Panc1 (cell line): ENCODE measurements at regions of chr12 and their contacts with region 1.

Region 1: DNA sequence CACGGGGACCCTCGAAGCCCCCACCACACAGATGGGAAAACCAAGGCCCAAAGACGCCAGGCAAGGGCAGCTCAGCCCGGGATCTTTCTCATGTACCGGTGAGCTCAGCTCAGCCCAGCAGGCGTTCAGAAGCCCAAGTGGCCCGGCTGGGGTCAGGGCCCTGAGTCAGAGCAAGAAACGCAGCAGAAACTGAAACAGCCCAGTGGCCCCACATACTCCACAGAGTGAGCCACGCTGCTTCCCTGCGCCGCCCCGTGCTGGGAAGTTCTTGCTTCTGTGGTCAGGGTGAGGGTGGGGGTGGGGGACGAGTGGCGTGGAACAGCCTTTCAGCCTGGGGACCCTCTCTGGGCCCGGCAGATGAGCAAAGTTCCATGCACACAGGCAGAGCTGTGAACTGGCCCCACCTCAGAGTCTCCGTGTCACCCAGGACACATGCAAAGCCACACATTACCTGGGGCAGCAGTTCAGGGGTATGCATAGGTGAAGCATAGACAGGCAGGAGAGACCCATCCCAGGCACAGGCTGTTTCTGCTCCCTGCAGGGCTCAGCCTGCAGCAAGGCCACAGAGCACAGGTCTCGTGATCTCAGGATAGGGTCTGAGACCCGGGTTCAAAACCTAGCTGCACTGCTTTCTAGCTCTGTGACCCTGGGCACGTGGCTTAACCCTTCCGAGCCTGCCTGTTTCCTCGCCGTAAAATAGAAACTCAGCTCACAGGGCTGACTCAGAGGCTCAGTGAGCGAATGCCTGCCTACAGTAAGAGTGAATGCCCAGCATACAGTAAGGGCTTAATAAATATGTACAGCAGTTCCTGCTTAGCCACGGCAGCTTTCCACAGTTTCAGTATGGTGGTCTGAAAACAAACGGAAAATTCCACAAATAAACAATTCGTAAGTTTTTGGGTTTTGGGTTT is 21.6 kb downstream of the NCOR2 start:
- DNase-seq: no peak
- ATAC-seq: peak; percentile 21
- H3K4me3 ChIP-seq: peak overlapping the region in 1 of 2 experiments; percentile 28; a peak in 2 of 4 replicates
- H3K27ac ChIP-seq: peak overlapping the region; percentile 98
- H3K4me1 ChIP-seq: peaks cover 86% of the 10 kb centered on the region
- H3K27me3 ChIP-seq: no peaks in the 10 kb centered on the region
- CTCF ChIP-seq: no peak

Region 2: GRCh38 chr12:123621619-123622530 is 923.9 kb before region 1 on chr12:
- CTCF ChIA-PET with region 1: no interaction called
- POLR2A ChIA-PET with region 1: no interaction called
- in situ Hi-C with region 1: no loop called
- intact Hi-C with region 1: no loop called
- DNase-seq: no peak
- ATAC-seq: peak; percentile 39; the same call in 1 of the 2 replicates
- H3K4me3 ChIP-seq: no peak overlapping the region
- H3K27ac ChIP-seq: no peak overlapping the region
- H3K4me1 ChIP-seq: no peaks in the 10 kb centered on the region
- H3K27me3 ChIP-seq: no peaks in the 10 kb centered on the region
- CTCF ChIP-seq: no peak

Region 3: GRCh38 chr12:124514145-124514995 is 31.4 kb before region 1 on chr12:
- CTCF ChIA-PET with region 1: interaction called, 3 read pairs
- POLR2A ChIA-PET with region 1: interaction called, 13 read pairs
- in situ Hi-C with region 1: no loop called
- intact Hi-C with region 1: no loop called
- DNase-seq: no peak
- ATAC-seq: no peak
- H3K4me3 ChIP-seq: no peak overlapping the region
- H3K27ac ChIP-seq: peak overlapping the region; percentile 90
- H3K4me1 ChIP-seq: peaks cover 80% of the 10 kb centered on the region
- H3K27me3 ChIP-seq: no peaks in the 10 kb centered on the region
- CTCF ChIP-seq: no peak

Region 4: DNA sequence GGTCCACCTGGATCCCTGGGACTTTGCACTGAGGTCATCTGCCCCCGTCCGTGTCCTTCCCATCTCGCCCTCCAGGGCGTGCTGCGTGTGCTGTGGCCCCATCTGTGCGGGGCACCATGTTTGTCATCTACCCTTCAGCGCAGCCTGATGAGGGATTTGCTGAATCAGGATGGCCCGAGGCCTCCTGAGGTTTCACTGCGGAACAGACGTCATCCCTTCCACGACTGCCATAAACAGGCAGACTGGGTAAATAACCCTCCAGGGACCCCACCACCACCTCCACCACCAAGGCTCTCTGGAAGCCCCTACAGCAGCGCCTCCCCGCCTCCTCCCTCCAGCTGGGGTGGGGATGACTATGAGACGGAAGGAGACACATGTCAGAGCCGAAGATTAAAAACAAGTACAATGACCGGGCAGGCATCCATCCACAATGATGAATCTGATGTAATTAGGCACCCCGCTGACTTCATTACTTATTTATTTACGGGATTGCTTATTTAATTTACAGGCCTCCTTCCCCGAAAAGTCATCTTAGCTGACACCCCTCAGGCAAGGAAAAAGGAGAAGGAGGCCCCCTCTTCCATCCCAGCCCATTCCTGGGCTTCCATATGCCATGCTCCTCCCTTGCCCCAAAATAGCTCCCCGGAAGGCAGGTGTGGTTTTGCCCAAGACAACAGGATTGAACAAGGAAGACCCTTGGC is 17.8 kb before region 1 on chr12:
- CTCF ChIA-PET with region 1: no interaction called
- POLR2A ChIA-PET with region 1: no interaction called
- in situ Hi-C with region 1: no loop called
- intact Hi-C with region 1: no loop called
- DNase-seq: no peak
- ATAC-seq: peak; percentile 31
- H3K4me3 ChIP-seq: no peak overlapping the region
- H3K27ac ChIP-seq: peak overlapping the region; percentile 77
- H3K4me1 ChIP-seq: peaks cover 75% of the 10 kb centered on the region
- H3K27me3 ChIP-seq: no peaks in the 10 kb centered on the region
- CTCF ChIP-seq: no peak

Region 5: DNA sequence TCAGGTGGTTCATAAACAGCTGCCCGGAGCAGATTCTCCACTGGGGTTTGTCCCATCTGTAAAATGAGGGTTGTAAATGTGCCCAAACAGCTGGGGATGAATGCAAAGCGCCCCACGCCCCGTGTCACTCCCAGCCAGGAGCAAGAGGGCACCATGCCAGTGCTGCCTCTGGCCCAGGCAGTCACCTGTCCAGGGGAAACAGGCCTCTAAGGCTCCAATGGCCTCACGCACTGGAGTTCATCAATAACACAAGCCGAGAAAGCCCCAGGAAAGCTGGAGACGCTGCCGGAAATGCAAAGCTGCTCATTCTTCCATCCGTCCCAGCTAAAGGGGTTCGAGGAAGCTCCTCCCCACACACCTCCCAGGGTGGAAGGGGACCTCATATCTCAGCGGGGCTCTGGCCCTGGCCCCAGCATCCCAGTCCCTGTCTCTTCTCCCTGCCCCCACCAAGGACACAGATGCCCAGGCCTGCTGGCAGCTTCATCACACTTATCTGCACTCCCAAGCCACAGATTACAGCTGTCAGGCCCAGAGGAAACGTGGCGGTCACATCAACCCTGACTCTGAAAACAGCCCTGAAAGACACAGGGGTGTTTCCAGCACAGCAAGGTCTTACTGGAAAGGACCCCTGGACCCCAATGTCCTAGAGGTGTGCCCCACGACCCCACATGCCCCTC is 296.4 kb after region 1 on chr12:
- CTCF ChIA-PET with region 1: no interaction called
- POLR2A ChIA-PET with region 1: interaction called, 15 read pairs
- in situ Hi-C with region 1: no loop called
- intact Hi-C with region 1: no loop called
- DNase-seq: no peak
- ATAC-seq: no peak
- H3K4me3 ChIP-seq: no peak overlapping the region
- H3K27ac ChIP-seq: peak overlapping the region; percentile 69
- H3K4me1 ChIP-seq: peaks cover 50% of the 10 kb centered on the region
- H3K27me3 ChIP-seq: no peaks in the 10 kb centered on the region
- CTCF ChIP-seq: no peak